ENCODE measurements at regions of chr20 and their contacts with region 1.

Region 1: DNA sequence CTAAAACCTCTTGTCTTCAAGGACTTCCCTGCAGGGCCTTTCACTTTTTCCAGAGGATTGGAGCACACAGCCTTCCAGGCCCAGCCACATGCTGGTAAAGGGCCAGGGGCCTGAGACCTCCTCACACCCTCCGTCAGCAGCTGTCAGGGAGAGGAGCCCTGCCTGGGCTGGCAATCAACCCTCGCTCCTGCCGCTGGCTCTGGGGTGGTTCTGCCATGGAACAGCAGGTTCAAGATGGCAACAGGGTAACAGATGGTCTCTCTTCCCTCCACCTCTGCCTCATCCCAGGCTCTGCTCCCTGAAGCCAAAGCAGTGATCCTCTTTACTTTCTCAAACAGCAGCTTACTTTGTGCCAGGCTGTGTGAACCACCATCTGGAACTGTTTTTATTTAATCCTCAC is 23.8 kb downstream of the PCNA start:
- DNase-seq: no peak
- H3K4me3 ChIP-seq: no peak overlapping the region
- H3K27ac ChIP-seq: no peak overlapping the region
- H3K4me1 ChIP-seq: peaks cover 0 to 6% (median 0%) of the 10 kb centered on the region in 4 donors
- H3K27me3 ChIP-seq: no peaks in the 10 kb centered on the region
- CTCF ChIP-seq: no peak
- EP300 ChIP-seq: no peak
- POLR2A ChIP-seq: no peak

Region 2: GRCh38 chr20:4766631-4767030 is 329.3 kb before region 1 on chr20:
- intact Hi-C with region 1: loop called (anchors 5 kb)
- DNase-seq: peak in 1 of 2 donors; percentile 25
- H3K4me3 ChIP-seq: no peak overlapping the region
- H3K27ac ChIP-seq: no peak overlapping the region
- H3K4me1 ChIP-seq: peaks cover 0 to 3% (median 0%) of the 10 kb centered on the region in 4 donors
- H3K27me3 ChIP-seq: no peaks in the 10 kb centered on the region
- CTCF ChIP-seq: no peak
- EP300 ChIP-seq: no peak
- POLR2A ChIP-seq: no peak

Region 3: GRCh38 chr20:5168651-5169396 is 72.9 kb after region 1 on chr20:
- intact Hi-C with region 1: no loop called
- DNase-seq: peak in 1 of 2 donors; percentile 60
- H3K4me3 ChIP-seq: no peak overlapping the region
- H3K27ac ChIP-seq: peak overlapping the region in 4 of 5 donors; percentile 29 to 66 (median 44)
- H3K4me1 ChIP-seq: peaks cover 12 to 96% (median 62%) of the 10 kb centered on the region in 4 donors
- H3K27me3 ChIP-seq: no peaks in the 10 kb centered on the region
- CTCF ChIP-seq: no peak
- EP300 ChIP-seq: no peak
- POLR2A ChIP-seq: no peak